Stomach (tissue), 19 donors: ENCODE measurements at regions of chr18 and their contacts with region 1.

Region 1: GRCh38 chr18:70205421-70206397 is at the start of gene RTTN:
- DNase-seq: peak; percentile 94 to 98
- H3K4me3 ChIP-seq: peak within 1 kb of the TSS; percentile 66 to 92 (median 84)
- H3K27ac ChIP-seq: peak within 1 kb of the TSS; percentile 94 to 98 (median 97)
- H3K4me1 ChIP-seq: peaks cover 6 to 25% (median 18%) of the 10 kb centered on the region in 4 donors
- H3K27me3 ChIP-seq: no peaks in the 10 kb centered on the region
- CTCF ChIP-seq: no peak
- EP300 ChIP-seq: no peak
- POLR2A ChIP-seq: no peak
- total RNA-seq, gene RTTN: 6.4 to 52.1 (median 29.8) TPM

Region 2: GRCh38 chr18:70289351-70290330 is 83.9 kb after region 1 on chr18:
- intact Hi-C with region 1: loop called (anchors 10 kb)
- DNase-seq: peak; percentile 42 to 80
- H3K4me3 ChIP-seq: peak overlapping the region; percentile 68 to 81 (median 76)
- H3K27ac ChIP-seq: peak overlapping the region; percentile 85 to 96 (median 94)
- H3K4me1 ChIP-seq: peaks cover 23 to 79% (median 49%) of the 10 kb centered on the region in 4 donors
- H3K27me3 ChIP-seq: no peaks in the 10 kb centered on the region
- CTCF ChIP-seq: no peak
- EP300 ChIP-seq: no peak
- POLR2A ChIP-seq: no peak

Region 3: DNA sequence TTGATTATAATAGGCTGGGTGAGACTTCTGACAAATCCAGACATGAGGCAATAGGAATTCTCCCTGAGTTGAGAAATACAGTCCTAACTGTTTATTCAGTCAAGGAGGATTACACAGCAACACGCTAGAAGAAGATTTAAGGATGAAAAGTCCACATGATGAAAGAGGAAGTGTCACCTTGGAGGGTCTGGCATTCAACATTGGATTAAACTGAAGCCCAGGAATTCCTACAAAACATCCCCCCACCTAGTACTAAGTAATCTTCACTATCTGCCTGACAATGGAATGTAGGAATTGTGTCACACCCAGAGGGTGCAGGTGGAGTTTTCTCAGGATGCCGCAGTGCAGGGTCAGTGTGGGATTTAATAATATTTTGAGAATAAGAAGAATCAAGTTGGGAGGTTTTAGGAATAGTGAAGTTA is 225.5 kb after region 1 on chr18:
- intact Hi-C with region 1: loop called (anchors 5 kb)
- DNase-seq: no peak
- H3K4me3 ChIP-seq: no peak overlapping the region
- H3K27ac ChIP-seq: no peak overlapping the region
- H3K4me1 ChIP-seq: peaks cover 0 to 10% (median 6%) of the 10 kb centered on the region in 4 donors
- H3K27me3 ChIP-seq: no peaks in the 10 kb centered on the region
- CTCF ChIP-seq: no peak
- EP300 ChIP-seq: no peak
- POLR2A ChIP-seq: no peak

Region 4: DNA sequence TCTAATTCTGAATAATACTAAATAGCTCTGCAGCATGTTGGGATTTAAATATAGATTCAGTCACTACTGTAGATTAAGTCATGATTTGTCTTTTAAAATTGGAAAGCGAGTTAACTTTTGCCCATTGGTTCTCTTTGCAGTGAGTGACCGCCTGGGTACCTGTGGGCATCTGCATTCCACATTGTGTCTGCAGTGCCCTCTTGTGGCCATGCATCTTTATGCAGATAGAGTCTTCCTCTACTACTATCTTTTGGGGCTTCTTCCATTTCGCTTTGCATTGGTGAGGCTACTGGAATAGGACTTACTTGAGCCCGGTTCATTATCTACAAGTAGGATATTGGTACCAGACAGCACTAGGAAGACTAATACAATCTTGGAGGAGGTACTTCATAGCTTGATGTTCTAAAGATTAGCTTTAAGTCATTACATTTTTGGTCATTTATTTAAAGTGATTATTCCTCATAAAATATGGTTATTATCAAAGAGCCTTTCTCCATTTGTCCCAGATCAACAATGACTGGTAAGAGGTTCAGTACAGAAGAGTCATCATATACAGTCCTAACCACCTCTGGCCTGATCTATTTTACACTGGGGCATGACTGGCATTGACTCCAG is 286.1 kb after region 1 on chr18:
- intact Hi-C with region 1: no loop called
- DNase-seq: peak; percentile 52 to 57
- H3K4me3 ChIP-seq: no peak overlapping the region
- H3K27ac ChIP-seq: no peak overlapping the region
- H3K4me1 ChIP-seq: no peaks in the 10 kb centered on the region
- H3K27me3 ChIP-seq: peaks cover 0 to 3% (median 0%) of the 10 kb centered on the region in 3 donors
- CTCF ChIP-seq: peak in 5 of 7 experiments; percentile 26 to 61 (median 59)
- EP300 ChIP-seq: no peak
- POLR2A ChIP-seq: no peak

Region 5: GRCh38 chr18:70598406-70598805 is 392.7 kb after region 1 on chr18:
- intact Hi-C with region 1: no loop called
- DNase-seq: no peak
- H3K4me3 ChIP-seq: no peak overlapping the region
- H3K27ac ChIP-seq: no peak overlapping the region
- H3K4me1 ChIP-seq: no peaks in the 10 kb centered on the region
- H3K27me3 ChIP-seq: no peaks in the 10 kb centered on the region
- CTCF ChIP-seq: no peak
- EP300 ChIP-seq: no peak
- POLR2A ChIP-seq: no peak